Activated CD4-positive, alpha-beta memory T cell treated with anti-CD3 and anti-CD28 coated beads for 36 hours (primary cell): ENCODE measurements at regions of chr10 and their contacts with region 1.

Region 1: GRCh38 chr10:124719213-124719851 is 24.8 kb downstream of the FAM53B start:
- DNase-seq: peak; percentile 85
- H3K4me3 Mint-ChIP-seq: peak overlapping the region; percentile 74
- H3K27ac Mint-ChIP-seq: peak overlapping the region; percentile 96
- H3K4me1 Mint-ChIP-seq: peaks cover 92% of the 10 kb centered on the region
- H3K27me3 Mint-ChIP-seq: no peaks in the 10 kb centered on the region

Region 2: GRCh38 chr10:124520558-124521428 is 198.5 kb before region 1 on chr10:
- CTCF ChIA-PET with region 1: no interaction called
- POLR2A ChIA-PET with region 1: no interaction called
- intact Hi-C with region 1: no loop called
- DNase-seq: no peak
- H3K4me3 Mint-ChIP-seq: no peak overlapping the region
- H3K27ac Mint-ChIP-seq: no peak overlapping the region
- H3K4me1 Mint-ChIP-seq: no peaks in the 10 kb centered on the region
- H3K27me3 Mint-ChIP-seq: no peaks in the 10 kb centered on the region

Region 3: DNA sequence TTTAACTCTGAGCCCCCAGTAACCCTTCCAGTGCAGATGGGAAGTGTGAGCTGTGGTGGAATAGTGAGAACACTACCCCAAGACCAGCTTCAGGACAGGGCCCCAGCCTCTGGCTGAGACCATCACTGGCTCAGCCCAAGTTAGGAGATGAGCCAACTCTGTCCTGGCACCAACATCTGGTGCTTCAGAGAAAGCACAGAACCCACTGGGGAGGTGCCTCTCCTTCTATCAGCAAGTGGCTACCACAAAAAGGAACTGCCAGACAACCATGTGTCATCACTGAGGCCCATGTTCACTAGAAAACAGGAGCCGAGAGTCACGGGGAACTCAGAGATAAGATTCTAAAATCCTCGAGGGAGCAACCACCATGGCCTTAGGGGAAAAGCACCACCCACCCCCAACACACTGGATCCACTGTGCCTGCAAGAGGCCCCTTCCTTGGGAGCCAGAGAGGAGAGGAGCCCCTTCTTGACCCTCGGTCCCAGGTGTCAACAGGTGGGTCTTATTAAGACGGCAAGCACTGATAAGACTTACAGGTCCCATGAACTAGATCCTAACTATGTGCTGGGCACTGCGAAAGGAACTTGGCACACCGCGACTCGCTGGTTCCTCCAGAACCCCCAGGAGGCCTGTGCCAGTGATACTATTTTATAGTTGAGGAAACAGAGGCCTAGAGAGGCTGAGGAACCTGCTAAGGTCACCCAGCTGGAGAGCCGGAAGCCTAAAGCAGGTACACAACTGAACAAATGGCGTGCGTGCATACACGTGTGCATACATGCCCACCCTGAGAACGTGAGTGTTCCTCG is 77.8 kb before region 1 on chr10:
- CTCF ChIA-PET with region 1: interaction called, 16 read pairs
- POLR2A ChIA-PET with region 1: no interaction called
- intact Hi-C with region 1: loop called (anchors 1 kb)
- DNase-seq: peak; percentile 76
- H3K4me3 Mint-ChIP-seq: peak overlapping the region; percentile 54
- H3K27ac Mint-ChIP-seq: peak overlapping the region; percentile 94
- H3K4me1 Mint-ChIP-seq: peaks cover 78% of the 10 kb centered on the region
- H3K27me3 Mint-ChIP-seq: no peaks in the 10 kb centered on the region

Region 4: GRCh38 chr10:124671486-124672075 is 47.8 kb before region 1 on chr10:
- CTCF ChIA-PET with region 1: interaction called, 10 read pairs
- POLR2A ChIA-PET with region 1: interaction called, 3 read pairs
- intact Hi-C with region 1: no loop called
- DNase-seq: peak; percentile 48
- H3K4me3 Mint-ChIP-seq: no peak overlapping the region
- H3K27ac Mint-ChIP-seq: peak overlapping the region; percentile 83
- H3K4me1 Mint-ChIP-seq: peaks cover 89% of the 10 kb centered on the region
- H3K27me3 Mint-ChIP-seq: no peaks in the 10 kb centered on the region

Region 5: GRCh38 chr10:124697830-124698544 is 21.3 kb before region 1 on chr10:
- CTCF ChIA-PET with region 1: interaction called, 46 read pairs
- POLR2A ChIA-PET with region 1: interaction called, 88 read pairs
- intact Hi-C with region 1: loop called (anchors 1 kb)
- DNase-seq: peak; percentile 75
- H3K4me3 Mint-ChIP-seq: peak overlapping the region; percentile 26
- H3K27ac Mint-ChIP-seq: peak overlapping the region; percentile 97
- H3K4me1 Mint-ChIP-seq: peaks cover 100% of the 10 kb centered on the region
- H3K27me3 Mint-ChIP-seq: no peaks in the 10 kb centered on the region

Region 6: DNA sequence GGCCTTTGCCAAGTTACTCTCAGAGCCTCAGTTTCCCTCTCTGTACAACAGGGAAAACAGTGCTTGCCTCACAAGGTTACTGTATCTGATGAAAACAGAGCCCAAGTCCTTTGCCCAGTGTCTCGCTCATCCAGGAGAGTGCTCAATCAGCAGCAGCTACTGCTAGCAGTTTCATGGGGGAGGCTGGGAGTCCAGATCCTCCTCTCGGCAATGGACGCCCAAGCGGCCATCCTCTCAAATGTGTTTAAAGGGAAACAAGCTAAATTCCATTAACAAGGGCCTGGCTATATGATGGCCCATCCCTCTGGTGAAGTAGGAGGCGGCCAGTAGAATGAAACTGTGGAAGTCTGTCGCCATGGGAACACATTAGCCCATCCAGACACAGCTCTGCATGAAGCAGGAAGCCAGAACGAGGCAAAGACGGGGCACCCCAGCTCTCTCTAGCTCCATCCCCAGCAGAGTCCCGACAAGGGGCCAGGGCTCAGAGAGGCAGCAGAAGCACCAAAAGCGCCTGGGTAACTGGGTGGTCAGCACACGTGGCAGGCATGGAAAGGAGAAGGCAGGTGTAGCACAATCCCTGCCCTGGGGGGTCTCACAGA is 10.3 kb before region 1 on chr10:
- CTCF ChIA-PET with region 1: interaction called, 46 read pairs
- POLR2A ChIA-PET with region 1: interaction called, 28 read pairs
- intact Hi-C with region 1: no loop called
- DNase-seq: no peak
- H3K4me3 Mint-ChIP-seq: no peak overlapping the region
- H3K27ac Mint-ChIP-seq: peak overlapping the region; percentile 66
- H3K4me1 Mint-ChIP-seq: peaks cover 89% of the 10 kb centered on the region
- H3K27me3 Mint-ChIP-seq: no peaks in the 10 kb centered on the region